GM10248 (cell line): ENCODE measurements at regions of chr17 and their contacts with region 1.

Region 1: GRCh38 chr17:58631523-58632323 is 60.1 kb downstream of the TEX14 start:
- DNase-seq: peak; percentile 87
- CTCF ChIP-seq: no peak

Region 2: GRCh38 chr17:58452521-58453137 is 179.1 kb before region 1 on chr17:
- CTCF ChIA-PET with region 1: no interaction called
- POLR2A ChIA-PET with region 1: no interaction called
- DNase-seq: no peak
- CTCF ChIP-seq: no peak

Region 3: GRCh38 chr17:58517734-58518609 is 113.8 kb before region 1 on chr17:
- CTCF ChIA-PET with region 1: no interaction called
- POLR2A ChIA-PET with region 1: interaction called, 15 read pairs
- DNase-seq: peak; percentile 96
- CTCF ChIP-seq: no peak

Region 4: DNA sequence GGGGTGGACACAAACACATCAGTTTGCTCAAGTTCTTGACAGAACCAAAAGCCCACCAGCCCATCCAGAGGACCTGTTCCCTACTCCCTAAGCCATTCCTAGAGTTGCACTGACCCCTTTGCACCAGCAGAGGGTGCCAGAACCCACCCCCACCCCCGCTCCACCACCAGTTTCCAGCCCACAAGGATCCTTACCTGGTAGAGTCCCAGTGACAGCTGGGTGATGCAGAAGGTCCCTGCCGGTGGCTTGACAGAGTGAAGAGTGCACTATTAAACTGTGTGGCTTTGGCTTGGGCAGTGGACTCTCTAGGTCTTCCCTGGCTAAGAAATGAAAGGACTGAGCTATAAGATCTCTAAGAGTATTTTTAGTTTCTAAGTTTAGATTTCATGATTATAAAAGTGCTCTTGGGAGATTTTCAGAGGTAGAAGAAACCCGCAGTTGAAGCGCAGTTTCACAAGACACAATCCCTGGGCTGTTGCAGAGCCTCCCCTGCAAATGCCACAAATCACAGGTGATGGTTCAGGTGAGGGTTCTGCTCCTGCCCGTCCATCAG is 43.9 kb before region 1 on chr17:
- CTCF ChIA-PET with region 1: interaction called, 14 read pairs
- POLR2A ChIA-PET with region 1: interaction called, 9 read pairs
- DNase-seq: peak; percentile 77
- CTCF ChIP-seq: peak; percentile 86

Region 5: DNA sequence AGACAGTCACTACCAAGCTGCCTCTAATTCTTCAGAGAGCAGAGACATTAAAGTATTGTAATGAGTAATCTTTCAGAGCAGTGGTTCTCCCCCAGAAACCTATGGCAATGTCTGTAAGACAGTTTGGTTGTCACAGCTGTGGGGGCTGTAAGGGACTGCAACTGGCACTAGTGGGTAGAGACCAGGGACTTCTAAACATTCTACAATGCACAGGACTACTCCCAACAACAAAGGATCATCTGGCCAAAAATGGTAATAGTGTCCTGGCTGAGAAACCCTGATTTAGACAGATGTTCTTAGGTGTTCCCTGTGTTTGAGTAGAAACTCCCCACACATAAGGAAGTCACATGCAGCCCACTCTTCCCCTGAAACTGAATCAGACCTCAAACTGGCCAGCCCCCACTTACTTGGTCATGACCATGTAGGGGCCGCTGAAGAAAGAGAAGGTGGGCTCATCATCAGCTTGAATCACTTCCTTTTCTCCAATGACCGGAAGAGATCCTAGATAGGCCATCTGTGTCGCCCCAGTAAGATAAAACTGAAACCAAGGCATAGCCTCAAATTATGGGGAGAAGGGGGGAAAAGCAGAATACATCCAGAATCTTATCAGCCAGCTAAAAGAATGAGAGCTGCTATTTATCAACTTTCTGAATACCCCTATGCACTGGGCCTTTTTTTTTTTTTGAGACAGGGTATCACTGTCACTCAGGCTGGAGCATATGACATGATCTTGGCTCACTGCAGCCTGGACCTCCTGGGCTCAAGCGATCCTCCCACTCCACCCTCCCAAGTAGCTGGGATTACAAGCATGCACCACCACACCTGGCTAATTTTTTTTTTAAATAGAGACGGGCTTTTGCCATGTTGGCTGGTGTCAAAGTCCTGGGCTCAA is 15.7 kb before region 1 on chr17:
- CTCF ChIA-PET with region 1: interaction called, 7 read pairs
- POLR2A ChIA-PET with region 1: interaction called, 146 read pairs
- DNase-seq: peak; percentile 73
- CTCF ChIP-seq: no peak

Region 6: GRCh38 chr17:58658804-58659713 is 27.3 kb after region 1 on chr17:
- CTCF ChIA-PET with region 1: no interaction called
- POLR2A ChIA-PET with region 1: interaction called, 238 read pairs
- DNase-seq: peak; percentile 85
- CTCF ChIP-seq: no peak

Region 7: DNA sequence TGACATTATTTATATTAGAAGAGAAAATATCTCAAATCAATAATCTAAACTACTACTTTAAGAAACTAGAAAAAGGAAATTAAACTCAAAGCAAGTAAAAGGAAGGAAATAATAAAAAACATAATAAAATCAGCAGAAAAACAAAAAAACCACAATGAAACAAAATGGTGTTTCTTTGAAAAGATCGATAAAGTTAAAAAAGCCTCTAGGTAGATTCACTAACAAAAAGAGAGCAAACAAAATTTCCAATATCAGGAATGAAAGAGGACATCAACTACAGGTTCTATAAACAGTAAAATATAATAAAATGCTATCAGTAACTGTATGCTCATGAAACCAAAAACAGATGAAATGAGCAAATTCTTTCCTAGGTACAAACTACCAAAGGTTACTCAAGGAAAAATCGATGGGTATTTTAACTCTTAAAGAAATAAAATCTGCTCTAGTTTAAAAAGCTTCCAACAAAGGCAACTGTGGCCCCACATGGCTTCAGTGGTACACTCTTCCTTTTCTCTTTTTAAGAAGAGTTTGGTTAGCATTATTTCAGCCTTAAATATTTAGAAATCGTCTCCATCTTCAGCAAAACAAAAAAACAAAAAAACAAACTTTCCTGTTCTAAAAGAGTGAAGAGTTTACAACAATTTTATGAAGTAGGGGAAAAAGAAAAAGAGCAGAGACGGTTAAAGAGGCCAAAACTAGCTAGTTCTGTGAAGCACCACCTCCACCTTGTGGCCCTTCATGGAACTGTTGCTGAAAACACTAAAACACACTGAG is 372.8 kb after region 1 on chr17:
- CTCF ChIA-PET with region 1: interaction called, 13 read pairs
- POLR2A ChIA-PET with region 1: interaction called, 8 read pairs
- DNase-seq: peak; percentile 57
- CTCF ChIP-seq: peak; percentile 88